ENCODE measurements at regions of chr11 and their contacts with region 1.

Region 1: DNA sequence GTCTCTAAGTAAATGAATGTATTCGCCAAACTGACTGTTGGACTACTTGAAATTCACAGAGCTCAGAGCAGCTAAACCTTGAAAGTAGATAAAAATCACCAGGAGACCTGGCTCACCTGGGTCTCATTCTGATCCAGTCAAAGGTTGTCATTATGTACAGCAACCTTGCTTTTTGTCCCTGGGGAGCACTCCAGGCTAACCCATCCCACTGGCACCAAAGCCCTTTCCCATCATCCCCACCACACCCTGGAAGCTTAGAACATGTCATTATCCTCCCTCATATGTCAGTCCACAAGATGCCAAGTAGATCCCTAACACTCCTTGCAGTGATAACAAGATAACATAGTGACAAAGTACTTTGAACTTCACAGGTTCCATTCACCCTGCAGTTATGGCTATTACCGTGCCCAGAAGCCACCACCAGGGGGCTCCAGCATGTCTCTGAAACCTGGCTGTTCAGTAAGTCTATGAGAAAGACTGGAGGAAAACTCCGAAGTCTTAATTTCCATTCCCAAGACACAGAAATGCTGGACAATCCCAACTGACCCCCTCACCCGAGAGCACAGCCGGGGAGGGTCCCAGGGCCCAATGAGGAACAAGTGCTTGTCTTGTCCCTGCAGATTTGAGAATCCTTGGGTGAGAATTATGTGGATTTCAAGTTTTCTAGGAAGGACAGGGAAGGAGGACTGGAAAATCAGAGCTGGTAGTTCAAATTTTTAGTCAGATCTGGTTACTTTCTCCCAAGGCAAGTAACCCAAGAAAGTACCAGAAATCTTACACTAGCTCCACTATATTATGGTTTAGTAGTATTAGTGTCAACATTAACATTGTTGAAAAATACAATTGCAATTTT is 43.0 kb upstream of the USP47 start:
- DNase-seq: peak; percentile 78
- ATAC-seq: peak; percentile 69
- H3K4me3 ChIP-seq: no peak overlapping the region
- H3K4me3 Mint-ChIP-seq: no peak overlapping the region
- H3K27ac ChIP-seq: no peak overlapping the region
- H3K27ac Mint-ChIP-seq: no peak overlapping the region
- H3K4me1 ChIP-seq: no peaks in the 10 kb centered on the region
- H3K4me1 Mint-ChIP-seq: no peaks in the 10 kb centered on the region
- H3K27me3 ChIP-seq: peaks cover 2 to 30% (median 19%) of the 10 kb centered on the region in 4 experiments
- H3K27me3 Mint-ChIP-seq: peaks cover 34% of the 10 kb centered on the region
- CTCF ChIP-seq: peak; percentile 98

Region 2: DNA sequence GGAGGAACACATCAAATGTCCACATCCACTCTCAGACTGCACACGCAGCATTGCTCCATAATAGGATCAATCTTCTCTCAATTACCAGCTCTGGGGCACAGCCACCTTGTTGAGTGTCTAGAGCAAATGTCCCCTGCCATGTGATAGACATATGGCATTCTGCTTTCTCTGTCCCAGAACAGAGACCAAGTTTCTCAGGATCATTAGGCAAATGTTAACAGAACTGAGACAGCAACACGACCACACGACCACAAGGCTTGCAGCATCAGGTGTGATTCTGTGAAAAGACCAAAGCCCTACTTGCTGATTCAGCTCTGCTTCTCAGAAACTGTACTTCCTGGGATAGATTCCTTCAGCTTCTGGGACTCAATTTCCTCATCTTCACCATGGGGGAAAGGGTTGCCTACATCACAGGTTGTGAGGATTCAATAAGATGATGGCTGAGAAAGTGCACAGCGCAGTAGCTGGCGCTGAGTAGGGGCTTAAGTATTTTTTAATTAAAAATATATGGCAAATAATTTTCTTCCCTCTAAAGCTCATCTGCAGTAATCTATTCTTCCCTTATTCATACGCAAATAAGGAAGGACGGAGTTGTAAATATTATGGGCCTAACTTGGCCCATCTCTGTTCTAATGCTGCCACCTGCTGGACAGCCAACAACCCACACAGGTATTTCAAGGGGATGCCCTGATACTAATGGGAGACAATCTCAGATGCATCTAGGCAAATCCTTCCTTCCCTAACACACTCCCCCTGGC is 11.3 kb before region 1 on chr11:
- CTCF ChIA-PET with region 1: interaction called, 11 read pairs
- POLR2A ChIA-PET with region 1: no interaction called
- intact Hi-C with region 1: no loop called
- DNase-seq: peak; percentile 77
- ATAC-seq: peak; percentile 68
- H3K4me3 ChIP-seq: no peak overlapping the region
- H3K4me3 Mint-ChIP-seq: no peak overlapping the region
- H3K27ac ChIP-seq: no peak overlapping the region
- H3K27ac Mint-ChIP-seq: no peak overlapping the region
- H3K4me1 ChIP-seq: no peaks in the 10 kb centered on the region
- H3K4me1 Mint-ChIP-seq: no peaks in the 10 kb centered on the region
- H3K27me3 ChIP-seq: peaks cover 0 to 10% (median 3%) of the 10 kb centered on the region in 4 experiments
- H3K27me3 Mint-ChIP-seq: peaks cover 28% of the 10 kb centered on the region
- CTCF ChIP-seq: peak; percentile 95

Region 3: DNA sequence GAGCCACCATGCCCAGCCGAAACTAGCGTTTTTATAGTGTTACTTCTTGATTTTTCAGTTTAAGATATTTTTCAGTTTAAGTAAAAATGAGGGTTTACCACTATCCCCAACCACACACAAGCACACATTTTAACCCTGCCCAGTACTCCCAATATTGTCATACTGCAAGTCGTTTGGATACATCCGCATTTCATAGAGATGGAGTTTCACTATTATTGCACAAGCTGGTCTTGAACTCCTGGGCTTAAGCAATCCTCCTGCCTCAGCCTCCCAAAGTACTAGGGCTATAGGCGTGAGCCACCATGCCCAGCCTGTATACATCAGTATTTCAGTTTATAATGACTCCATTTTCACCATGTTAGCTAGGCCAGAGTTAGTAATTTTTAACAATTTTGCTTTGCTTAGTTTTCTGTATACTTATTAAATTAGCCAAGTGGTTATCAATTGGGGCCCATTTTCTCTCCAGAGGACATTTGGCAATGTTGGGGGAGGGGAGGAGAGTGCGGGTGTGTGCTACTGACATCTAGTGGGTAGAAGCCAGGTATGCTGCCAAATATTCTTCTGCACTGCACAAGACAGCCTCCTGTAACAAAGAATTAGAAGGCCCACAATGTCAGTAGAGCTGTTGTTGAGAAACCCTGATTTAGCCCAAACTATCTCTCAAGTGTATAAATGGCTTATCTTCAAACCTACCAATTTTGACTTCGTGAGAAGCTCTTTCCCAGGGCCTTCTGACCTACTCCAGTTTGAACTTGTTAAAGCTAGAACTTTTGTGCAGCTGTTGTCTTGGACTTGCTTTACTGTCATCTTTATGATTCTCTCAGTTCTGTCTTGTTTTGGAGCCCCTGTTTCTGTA is 50.3 kb after region 1 on chr11:
- CTCF ChIA-PET with region 1: interaction called, 33 read pairs
- POLR2A ChIA-PET with region 1: no interaction called
- intact Hi-C with region 1: loop called (anchors 1 kb)
- DNase-seq: peak; percentile 80
- ATAC-seq: peak; percentile 96
- H3K4me3 ChIP-seq: no peak overlapping the region
- H3K4me3 Mint-ChIP-seq: no peak overlapping the region
- H3K27ac ChIP-seq: no peak overlapping the region
- H3K27ac Mint-ChIP-seq: no peak overlapping the region
- H3K4me1 ChIP-seq: peaks cover 24 to 48% of the 10 kb centered on the region in 2 donors
- H3K4me1 Mint-ChIP-seq: peaks cover 67% of the 10 kb centered on the region
- H3K27me3 ChIP-seq: no peaks in the 10 kb centered on the region
- H3K27me3 Mint-ChIP-seq: no peaks in the 10 kb centered on the region
- CTCF ChIP-seq: peak; percentile 84

Region 4: GRCh38 chr11:11895672-11896071 is 96.9 kb after region 1 on chr11:
- CTCF ChIA-PET with region 1: interaction called, 11 read pairs
- POLR2A ChIA-PET with region 1: no interaction called
- intact Hi-C with region 1: loop called (anchors 5 kb)
- DNase-seq: no peak
- ATAC-seq: no peak
- H3K4me3 ChIP-seq: no peak overlapping the region
- H3K4me3 Mint-ChIP-seq: no peak overlapping the region
- H3K27ac ChIP-seq: no peak overlapping the region
- H3K27ac Mint-ChIP-seq: no peak overlapping the region
- H3K4me1 ChIP-seq: no peaks in the 10 kb centered on the region
- H3K4me1 Mint-ChIP-seq: no peaks in the 10 kb centered on the region
- H3K27me3 ChIP-seq: no peaks in the 10 kb centered on the region
- H3K27me3 Mint-ChIP-seq: no peaks in the 10 kb centered on the region
- CTCF ChIP-seq: no peak

Region 5: DNA sequence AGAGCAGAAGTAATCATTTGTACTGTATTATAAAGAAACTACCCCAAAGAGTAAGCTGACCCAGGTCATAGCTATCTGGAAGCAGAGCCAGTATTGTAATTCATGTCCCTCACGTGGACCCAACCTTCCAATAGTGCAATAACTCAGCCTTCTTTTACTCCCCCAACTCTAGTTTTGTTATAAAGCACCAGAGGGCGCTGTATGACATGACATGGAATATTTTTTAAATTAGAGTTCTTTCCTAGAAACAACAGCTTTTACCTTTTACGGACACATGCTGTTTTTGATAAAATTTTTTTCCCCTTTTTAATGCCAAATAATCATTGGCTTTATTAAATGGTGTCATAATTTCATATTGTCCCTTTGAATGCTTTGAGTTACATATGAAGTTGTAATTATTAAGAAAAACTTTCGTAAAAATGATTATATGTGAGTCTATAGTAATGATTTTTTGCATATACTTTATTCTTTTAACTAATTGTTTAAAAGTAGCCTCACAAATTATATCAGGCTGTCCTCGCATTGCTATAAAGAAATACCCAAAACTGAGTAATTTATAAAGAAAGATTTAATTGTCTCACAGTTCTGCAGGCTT is 132.7 kb after region 1 on chr11:
- CTCF ChIA-PET with region 1: no interaction called
- POLR2A ChIA-PET with region 1: no interaction called
- intact Hi-C with region 1: loop called (anchors 10 kb)
- DNase-seq: no peak
- ATAC-seq: no peak
- H3K4me3 ChIP-seq: no peak overlapping the region
- H3K4me3 Mint-ChIP-seq: no peak overlapping the region
- H3K27ac ChIP-seq: no peak overlapping the region
- H3K27ac Mint-ChIP-seq: no peak overlapping the region
- H3K4me1 ChIP-seq: no peaks in the 10 kb centered on the region
- H3K4me1 Mint-ChIP-seq: peaks cover 2% of the 10 kb centered on the region
- H3K27me3 ChIP-seq: no peaks in the 10 kb centered on the region
- H3K27me3 Mint-ChIP-seq: no peaks in the 10 kb centered on the region
- CTCF ChIP-seq: peak; percentile 51

Region 6: GRCh38 chr11:11966826-11967668 is 168.2 kb after region 1 on chr11:
- CTCF ChIA-PET with region 1: interaction called, 5 read pairs
- POLR2A ChIA-PET with region 1: no interaction called
- intact Hi-C with region 1: loop called (anchors 1 kb)
- DNase-seq: peak; percentile 50
- ATAC-seq: peak; percentile 54
- H3K4me3 ChIP-seq: no peak overlapping the region
- H3K4me3 Mint-ChIP-seq: no peak overlapping the region
- H3K27ac ChIP-seq: no peak overlapping the region
- H3K27ac Mint-ChIP-seq: no peak overlapping the region
- H3K4me1 ChIP-seq: no peaks in the 10 kb centered on the region
- H3K4me1 Mint-ChIP-seq: no peaks in the 10 kb centered on the region
- H3K27me3 ChIP-seq: peaks cover 0 to 9% (median 0%) of the 10 kb centered on the region in 4 experiments
- H3K27me3 Mint-ChIP-seq: peaks cover 10% of the 10 kb centered on the region
- CTCF ChIP-seq: peak; percentile 75

Region 7: GRCh38 chr11:12043959-12044819 is 245.4 kb after region 1 on chr11:
- CTCF ChIA-PET with region 1: interaction called, 55 read pairs
- POLR2A ChIA-PET with region 1: no interaction called
- intact Hi-C with region 1: loop called (anchors 1 kb)
- DNase-seq: peak; percentile 71
- ATAC-seq: peak; percentile 69
- H3K4me3 ChIP-seq: no peak overlapping the region
- H3K4me3 Mint-ChIP-seq: no peak overlapping the region
- H3K27ac ChIP-seq: no peak overlapping the region
- H3K27ac Mint-ChIP-seq: no peak overlapping the region
- H3K4me1 ChIP-seq: no peaks in the 10 kb centered on the region
- H3K4me1 Mint-ChIP-seq: no peaks in the 10 kb centered on the region
- H3K27me3 ChIP-seq: no peaks in the 10 kb centered on the region
- H3K27me3 Mint-ChIP-seq: peaks cover 8% of the 10 kb centered on the region
- CTCF ChIP-seq: peak; percentile 93